IMR-90 (cell line): ENCODE measurements at regions of chr5 and their contacts with region 1.

Region 1: DNA sequence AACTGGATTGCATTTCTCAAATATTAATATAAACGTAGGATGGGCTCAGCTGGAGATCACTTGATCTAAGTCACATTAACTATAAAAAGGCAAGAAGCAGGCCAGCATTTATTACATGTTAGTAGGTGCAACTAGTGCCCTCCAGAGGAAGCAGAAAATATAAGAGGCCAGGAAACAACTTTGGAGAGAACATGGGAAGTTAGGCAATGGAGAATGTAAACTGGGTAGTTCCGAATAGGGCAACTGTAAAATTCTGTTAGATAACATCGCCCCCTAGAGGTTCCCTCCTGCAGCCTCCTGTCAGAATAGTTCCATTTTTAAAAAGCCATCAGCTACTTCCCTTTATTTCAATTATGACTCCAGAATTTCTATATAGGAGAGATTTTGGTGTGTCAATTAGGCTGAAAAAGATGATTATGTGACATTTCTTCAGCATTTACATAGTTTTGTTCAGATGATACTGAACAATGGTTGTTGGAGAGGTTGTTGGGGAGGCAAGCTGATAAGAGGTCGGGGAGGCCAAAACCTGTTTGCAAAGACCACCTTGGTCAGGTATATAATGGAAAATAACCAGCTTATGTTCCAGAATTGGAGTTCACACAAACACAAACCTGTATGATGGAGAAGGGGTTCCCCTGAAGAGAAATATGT is 22.4 kb downstream of the CCL28 start:
- DNase-seq: peak; percentile 90
- ATAC-seq: peak; percentile 99
- H3K4me3 ChIP-seq: no peak overlapping the region
- H3K27ac ChIP-seq: no peak overlapping the region
- H3K4me1 ChIP-seq: no peaks in the 10 kb centered on the region
- H3K27me3 ChIP-seq: peaks cover 5% of the 10 kb centered on the region
- CTCF ChIP-seq: peak; percentile 93
- POLR2A ChIP-seq: no peak
- RAD21 ChIP-seq: peak; percentile 78

Region 2: GRCh38 chr5:42908509-42909488 is 481.0 kb before region 1 on chr5:
- CTCF ChIA-PET with region 1: interaction called, 6 read pairs
- POLR2A ChIA-PET with region 1: no interaction called
- dilution Hi-C with region 1: no loop called
- in situ Hi-C with region 1: loop called (anchors 5 kb)
- intact Hi-C with region 1: loop called (anchors 1 kb)
- DNase-seq: peak; percentile 85
- ATAC-seq: peak; percentile 96
- H3K4me3 ChIP-seq: peak overlapping the region; percentile 50
- H3K27ac ChIP-seq: no peak overlapping the region
- H3K4me1 ChIP-seq: no peaks in the 10 kb centered on the region
- H3K27me3 ChIP-seq: peaks cover 13% of the 10 kb centered on the region
- CTCF ChIP-seq: peak; percentile 83
- POLR2A ChIP-seq: no peak
- RAD21 ChIP-seq: peak; percentile 78

Region 3: GRCh38 chr5:43066799-43067741 is 322.7 kb before region 1 on chr5:
- CTCF ChIA-PET with region 1: no interaction called
- POLR2A ChIA-PET with region 1: no interaction called
- dilution Hi-C with region 1: no loop called
- in situ Hi-C with region 1: no loop called
- intact Hi-C with region 1: loop called (anchors 1 kb)
- DNase-seq: peak; percentile 91
- ATAC-seq: peak; percentile 56
- H3K4me3 ChIP-seq: peak overlapping the region; percentile 69
- H3K27ac ChIP-seq: peak overlapping the region; percentile 88
- H3K4me1 ChIP-seq: peaks cover 4% of the 10 kb centered on the region
- H3K27me3 ChIP-seq: no peaks in the 10 kb centered on the region
- CTCF ChIP-seq: no peak
- POLR2A ChIP-seq: peak; percentile 89
- RAD21 ChIP-seq: no peak

Region 4: GRCh38 chr5:43073597-43074546 is 315.9 kb before region 1 on chr5:
- CTCF ChIA-PET with region 1: no interaction called
- POLR2A ChIA-PET with region 1: no interaction called
- dilution Hi-C with region 1: no loop called
- in situ Hi-C with region 1: no loop called
- intact Hi-C with region 1: loop called (anchors 2 kb)
- DNase-seq: peak; percentile 40
- ATAC-seq: peak; percentile 44; the same call in 1 of the 2 replicates
- H3K4me3 ChIP-seq: no peak overlapping the region
- H3K27ac ChIP-seq: no peak overlapping the region
- H3K4me1 ChIP-seq: peaks cover 4% of the 10 kb centered on the region; the same call in 1 of the 2 replicates
- H3K27me3 ChIP-seq: no peaks in the 10 kb centered on the region
- CTCF ChIP-seq: peak; percentile 58
- POLR2A ChIP-seq: no peak
- RAD21 ChIP-seq: peak; percentile 66

Region 5: DNA sequence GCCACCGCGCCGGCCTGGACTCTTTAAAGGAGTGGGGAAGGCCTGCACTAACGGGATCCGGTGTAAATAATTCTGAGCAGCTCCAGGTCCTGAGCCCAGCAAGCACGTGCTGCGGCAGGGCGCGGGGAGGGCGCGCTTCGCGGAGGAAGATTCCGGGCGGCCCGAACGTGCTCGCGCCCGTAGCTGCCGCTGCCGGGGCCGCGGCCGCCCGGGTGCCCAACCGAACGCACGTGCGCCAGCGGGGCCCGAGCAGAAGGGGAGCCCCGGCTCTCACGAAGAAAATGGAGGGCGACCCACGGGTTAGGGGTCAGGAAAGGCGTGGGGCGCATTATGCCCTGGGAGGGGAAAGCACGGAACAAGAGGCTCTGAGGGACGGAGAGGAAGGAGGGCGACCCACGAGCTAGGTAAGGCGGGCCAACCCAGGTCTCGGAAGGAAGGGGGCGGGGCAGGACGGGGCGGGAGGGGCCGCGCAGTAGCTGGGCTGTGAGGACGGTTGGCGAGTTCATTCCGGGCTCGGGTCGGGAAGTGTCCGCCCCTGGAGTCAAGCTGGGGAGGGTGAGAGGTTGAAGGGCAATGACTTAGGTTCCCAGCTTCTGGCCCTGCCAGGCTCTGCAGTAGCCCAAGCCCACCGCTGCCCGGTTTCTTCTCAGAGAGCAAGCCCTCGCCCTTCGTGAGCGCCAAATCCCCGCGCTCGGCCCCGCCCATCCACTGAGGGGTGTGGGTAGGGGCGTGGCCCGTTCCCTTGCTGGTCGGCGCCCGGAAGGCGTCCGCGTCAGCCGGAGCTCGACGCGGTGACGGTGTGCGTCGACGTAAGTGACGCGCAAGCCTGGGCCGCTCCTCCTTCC is 268.9 kb before region 1 on chr5 and contains the start of gene ZNF131:
- CTCF ChIA-PET with region 1: no interaction called
- POLR2A ChIA-PET with region 1: no interaction called
- dilution Hi-C with region 1: no loop called
- in situ Hi-C with region 1: no loop called
- intact Hi-C with region 1: loop called (anchors 5 kb)
- DNase-seq: peak; percentile 98
- ATAC-seq: peak; percentile 96
- H3K4me3 ChIP-seq: peak within 1 kb of the TSS; percentile 60
- H3K27ac ChIP-seq: peak within 1 kb of the TSS; percentile 86
- H3K4me1 ChIP-seq: 0 out of 2 replicates have a peak, but pooled peaks cover 2% of the 10 kb centered on the region
- H3K27me3 ChIP-seq: no peaks in the 10 kb centered on the region
- CTCF ChIP-seq: no peak
- POLR2A ChIP-seq: peak; percentile 75; the same call in 1 of the 2 replicates
- RAD21 ChIP-seq: no peak
- total RNA-seq, gene ZNF131: 36.2 and 47.8 TPM in 2 replicates

Region 6: GRCh38 chr5:43227655-43228054 is 162.1 kb before region 1 on chr5:
- CTCF ChIA-PET with region 1: interaction called, 3 read pairs
- POLR2A ChIA-PET with region 1: no interaction called
- dilution Hi-C with region 1: no loop called
- in situ Hi-C with region 1: loop called (anchors 10 kb)
- intact Hi-C with region 1: loop called (anchors 1 kb)
- DNase-seq: peak; percentile 64
- ATAC-seq: peak; percentile 83
- H3K4me3 ChIP-seq: no peak overlapping the region
- H3K27ac ChIP-seq: no peak overlapping the region
- H3K4me1 ChIP-seq: no peaks in the 10 kb centered on the region
- H3K27me3 ChIP-seq: peaks cover 4% of the 10 kb centered on the region; the same call in 1 of the 2 replicates
- CTCF ChIP-seq: peak; percentile 67
- POLR2A ChIP-seq: no peak
- RAD21 ChIP-seq: peak; percentile 58

Region 7: GRCh38 chr5:43305948-43306565 is 83.7 kb before region 1 on chr5:
- CTCF ChIA-PET with region 1: no interaction called
- POLR2A ChIA-PET with region 1: no interaction called
- dilution Hi-C with region 1: no loop called
- in situ Hi-C with region 1: no loop called
- intact Hi-C with region 1: loop called (anchors 5 kb)
- DNase-seq: peak; percentile 73
- ATAC-seq: peak; percentile 85
- H3K4me3 ChIP-seq: no peak overlapping the region
- H3K27ac ChIP-seq: no peak overlapping the region
- H3K4me1 ChIP-seq: no peaks in the 10 kb centered on the region
- H3K27me3 ChIP-seq: no peaks in the 10 kb centered on the region
- CTCF ChIP-seq: peak; percentile 68
- POLR2A ChIP-seq: no peak
- RAD21 ChIP-seq: peak; percentile 55